Activated CD4-positive, alpha-beta T cell treated with anti-CD3 and anti-CD28 coated beads, Interleukin-2, amount 10 ng/mL, durations not matched to agents 7 days and 5 days (primary cell): ENCODE measurements at regions of chr19 and their contacts with region 1.

Region 1: DNA sequence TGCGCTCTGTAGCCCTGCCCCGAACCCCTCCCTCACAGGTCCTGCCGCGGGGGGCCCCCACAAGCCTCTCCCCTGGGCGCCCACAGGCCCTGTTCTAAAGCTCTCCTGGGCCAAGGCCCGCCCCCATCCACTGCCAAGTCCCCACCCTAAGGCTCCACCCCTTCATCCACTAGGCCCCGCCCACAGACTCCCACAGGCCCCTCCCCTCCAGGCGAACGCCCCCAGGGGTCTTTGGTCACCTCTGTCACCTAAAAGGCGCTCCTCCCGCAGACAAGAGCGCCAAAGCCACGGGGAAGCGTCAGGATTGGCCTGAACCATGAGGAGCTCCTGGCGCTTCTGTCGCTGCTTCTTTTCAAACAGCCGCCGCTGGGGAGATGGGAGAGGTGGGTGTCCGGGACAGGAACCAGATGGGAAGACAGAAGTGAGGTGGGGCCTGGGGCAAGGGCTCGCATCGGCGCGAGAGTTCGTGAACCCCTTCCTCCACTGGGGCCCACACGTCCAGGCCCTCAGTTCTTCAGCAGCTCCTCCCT is 2.3 kb downstream of the TULP2 start:
- DNase-seq: peak; percentile 48
- H3K4me3 Mint-ChIP-seq: no peak overlapping the region
- H3K27ac Mint-ChIP-seq: peak overlapping the region; percentile 25
- H3K4me1 Mint-ChIP-seq: peaks cover 33% of the 10 kb centered on the region
- H3K27me3 Mint-ChIP-seq: peaks cover 11% of the 10 kb centered on the region

Region 2: GRCh38 chr19:48881741-48882657 is 14.3 kb before region 1 on chr19:
- CTCF ChIA-PET with region 1: interaction called, 11 read pairs
- POLR2A ChIA-PET with region 1: no interaction called
- DNase-seq: no peak
- H3K4me3 Mint-ChIP-seq: no peak overlapping the region
- H3K27ac Mint-ChIP-seq: peak overlapping the region; percentile 41
- H3K4me1 Mint-ChIP-seq: peaks cover 19% of the 10 kb centered on the region
- H3K27me3 Mint-ChIP-seq: no peaks in the 10 kb centered on the region

Region 3: DNA sequence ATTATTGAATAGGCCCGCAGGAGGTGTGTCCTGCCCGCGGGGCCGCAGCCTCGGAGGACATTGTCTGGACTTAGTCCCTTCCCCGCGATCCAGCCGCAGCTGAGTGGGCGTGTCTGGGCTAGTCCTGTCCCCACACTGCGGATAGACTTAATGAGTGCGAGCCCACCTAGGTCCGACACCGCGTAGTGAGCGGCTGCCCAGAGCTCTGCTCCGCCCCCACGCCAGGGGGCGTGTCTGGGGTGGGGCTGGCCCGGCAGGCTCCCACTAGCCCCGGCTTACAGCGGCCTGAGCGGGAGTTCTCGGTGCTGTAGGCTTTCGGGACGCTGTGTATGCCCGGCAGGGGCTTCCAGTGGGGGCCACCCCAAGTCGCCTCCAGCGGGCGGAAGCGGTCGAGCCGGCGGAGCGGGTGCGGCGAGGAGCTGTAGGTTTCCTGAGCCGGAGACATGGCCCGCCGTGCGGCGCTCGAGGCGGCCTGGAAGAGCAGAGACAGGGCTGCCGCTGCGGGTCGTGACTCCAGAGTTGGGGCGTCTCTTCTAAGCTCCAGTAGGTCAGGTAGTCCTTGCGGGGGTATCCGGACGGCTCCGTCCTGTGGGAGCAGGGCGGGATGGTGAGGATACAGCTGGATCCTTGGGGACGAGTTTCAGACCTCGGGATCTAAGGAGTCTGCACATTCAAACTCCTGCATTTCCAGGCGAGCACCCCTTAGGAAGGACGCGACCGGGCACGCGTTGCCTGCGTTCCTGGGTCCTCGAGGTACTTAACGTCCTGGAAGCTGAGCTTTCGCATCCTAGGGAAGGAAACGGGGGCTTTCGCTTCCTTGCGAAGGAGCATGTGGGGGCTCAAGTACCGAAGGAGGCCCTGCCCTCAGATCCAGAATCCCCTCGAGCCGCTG is 160.0 kb after region 1 on chr19:
- CTCF ChIA-PET with region 1: no interaction called
- POLR2A ChIA-PET with region 1: no interaction called
- DNase-seq: peak; percentile 41
- H3K4me3 Mint-ChIP-seq: peak overlapping the region; percentile 51
- H3K27ac Mint-ChIP-seq: no peak overlapping the region
- H3K4me1 Mint-ChIP-seq: peaks cover 23% of the 10 kb centered on the region
- H3K27me3 Mint-ChIP-seq: peaks cover 54% of the 10 kb centered on the region